Heart left ventricle (tissue), 16 donors: ENCODE measurements at regions of chr12 and their contacts with region 1.

Region 1: GRCh38 chr12:57899010-57899662 is 42.2 kb upstream of the ATP23 start:
- DNase-seq: peak in 3 of 5 donors; percentile 51 to 65 (median 53)
- ATAC-seq: peak in 3 of 4 donors; percentile 25 to 44 (median 36)
- H3K4me3 ChIP-seq: no peak overlapping the region
- H3K27ac ChIP-seq: peak overlapping the region in 11 of 12 donors; percentile 36 to 99 (median 97)
- H3K4me1 ChIP-seq: peaks cover 5 to 58% (median 48%) of the 10 kb centered on the region in 12 donors
- H3K27me3 ChIP-seq: no peaks in the 10 kb centered on the region
- CTCF ChIP-seq: no peak
- POLR2A ChIP-seq: no peak

Region 2: GRCh38 chr12:57765042-57765697 is 134.0 kb before region 1 on chr12:
- intact Hi-C with region 1: no loop called
- DNase-seq: peak in 1 of 5 donors; percentile 75
- ATAC-seq: peak in 3 of 4 donors; percentile 33 to 57 (median 35)
- H3K4me3 ChIP-seq: peak overlapping the region; percentile 3 to 61 (median 38)
- H3K27ac ChIP-seq: no peak overlapping the region
- H3K4me1 ChIP-seq: peaks cover 10 to 35% (median 25%) of the 10 kb centered on the region in 12 donors
- H3K27me3 ChIP-seq: peaks cover 9 to 47% (median 37%) of the 10 kb centered on the region in 9 donors
- CTCF ChIP-seq: peak in 7 of 12 donors; percentile 7 to 49 (median 31)
- POLR2A ChIP-seq: no peak

Region 3: GRCh38 chr12:57830393-57830792 is 68.7 kb before region 1 on chr12:
- intact Hi-C with region 1: loop called (anchors 1 to 5 kb)
- DNase-seq: no peak
- ATAC-seq: no peak
- H3K4me3 ChIP-seq: no peak overlapping the region
- H3K27ac ChIP-seq: peak overlapping the region in 7 of 12 donors; percentile 33 to 82 (median 64)
- H3K4me1 ChIP-seq: peaks cover 24 to 90% (median 73%) of the 10 kb centered on the region in 12 donors
- H3K27me3 ChIP-seq: no peaks in the 10 kb centered on the region
- CTCF ChIP-seq: no peak
- POLR2A ChIP-seq: no peak

Region 4: GRCh38 chr12:57836442-57837375 is 62.4 kb before region 1 on chr12:
- intact Hi-C with region 1: loop called (anchors 1 to 5 kb)
- DNase-seq: peak; percentile 87 to 91 (median 90)
- ATAC-seq: peak; percentile 37 to 76 (median 52)
- H3K4me3 ChIP-seq: peak overlapping the region in 10 of 12 donors; percentile 6 to 49 (median 26)
- H3K27ac ChIP-seq: peak overlapping the region in 11 of 12 donors; percentile 51 to 100 (median 70)
- H3K4me1 ChIP-seq: peaks cover 65 to 100% (median 100%) of the 10 kb centered on the region in 12 donors
- H3K27me3 ChIP-seq: no peaks in the 10 kb centered on the region
- CTCF ChIP-seq: no peak
- POLR2A ChIP-seq: no peak